Naive thymus-derived CD4-positive, alpha-beta T cell (primary cell): ENCODE measurements at regions of chr9 and their contacts with region 1.

Region 1: GRCh38 chr9:131502781-131503625 is at the start of gene POMT1:
- DNase-seq: peak; percentile 85 to 93 (median 90)
- ATAC-seq: peak; percentile 77
- H3K4me3 ChIP-seq: peak within 1 kb of the TSS; percentile 79
- H3K4me3 Mint-ChIP-seq: peak within 1 kb of the TSS; percentile 89 to 99 (median 94)
- H3K27ac ChIP-seq: peak within 1 kb of the TSS; percentile 88
- H3K27ac Mint-ChIP-seq: peak within 1 kb of the TSS; percentile 88 to 98 (median 93)
- H3K4me1 ChIP-seq: peaks cover 41 to 42% of the 10 kb centered on the region in 2 donors
- H3K4me1 Mint-ChIP-seq: peaks cover 51 to 73% (median 60%) of the 10 kb centered on the region in 7 donors
- H3K27me3 ChIP-seq: no peaks in the 10 kb centered on the region
- H3K27me3 Mint-ChIP-seq: no peaks in the 10 kb centered on the region
- total RNA-seq, gene POMT1: 40.0 to 55.8 (median 47.7) TPM

Region 2: DNA sequence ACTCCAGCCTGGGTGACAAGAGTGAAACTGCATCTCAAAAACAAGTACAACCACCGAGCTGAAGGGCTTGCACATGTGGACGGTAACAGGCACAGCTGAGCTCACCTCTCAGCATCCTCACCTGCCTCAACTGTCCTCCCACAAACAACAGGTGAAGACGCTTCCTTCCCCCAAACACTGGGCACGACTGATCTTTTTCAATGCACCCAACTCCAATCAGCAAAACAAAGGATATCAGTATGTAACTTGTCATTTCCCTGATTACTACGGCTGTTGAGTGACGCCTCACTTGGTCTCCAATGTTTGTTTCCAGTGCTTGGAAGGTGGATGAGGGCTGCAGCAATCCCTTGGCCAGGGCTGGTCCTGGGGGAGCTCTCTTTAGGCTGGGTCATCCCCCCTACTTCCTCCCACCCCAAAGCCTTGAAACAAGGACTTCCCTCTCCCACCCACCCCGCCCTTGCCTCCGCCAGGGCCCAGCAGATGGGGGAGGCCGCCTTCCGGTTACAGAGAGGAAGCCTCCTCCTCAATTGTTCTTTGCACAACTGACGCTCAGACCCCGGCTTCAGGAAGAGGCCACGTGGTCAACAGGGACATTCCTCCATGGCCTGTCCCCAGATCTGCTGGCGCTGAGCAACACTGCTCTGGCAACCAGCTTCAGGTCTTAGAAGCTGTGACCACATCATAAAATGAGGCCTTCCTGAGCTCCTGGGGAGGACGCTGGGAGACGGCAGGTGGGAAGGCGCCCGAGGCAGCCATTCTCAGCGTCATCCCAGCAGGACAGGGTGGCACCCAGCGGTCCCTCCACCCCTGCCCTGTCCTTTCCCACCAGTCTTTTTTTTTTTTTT is 232.6 kb before region 1 on chr9:
- CTCF ChIA-PET with region 1: no interaction called
- POLR2A ChIA-PET with region 1: interaction called, 4 read pairs
- intact Hi-C with region 1: loop called (anchors 5 kb)
- DNase-seq: peak in 8 of 9 donors; percentile 49 to 70 (median 64)
- ATAC-seq: peak; percentile 16
- H3K4me3 ChIP-seq: peak overlapping the region; percentile 74
- H3K4me3 Mint-ChIP-seq: peak overlapping the region; percentile 83 to 100 (median 92)
- H3K27ac ChIP-seq: peak overlapping the region; percentile 96
- H3K27ac Mint-ChIP-seq: peak overlapping the region; percentile 95 to 100 (median 99)
- H3K4me1 ChIP-seq: peaks cover 50 to 63% of the 10 kb centered on the region in 2 donors
- H3K4me1 Mint-ChIP-seq: peaks cover 30 to 61% (median 50%) of the 10 kb centered on the region in 7 donors
- H3K27me3 ChIP-seq: no peaks in the 10 kb centered on the region
- H3K27me3 Mint-ChIP-seq: no peaks in the 10 kb centered on the region

Region 3: GRCh38 chr9:131349881-131350563 is 153.0 kb before region 1 on chr9:
- CTCF ChIA-PET with region 1: interaction called, 12 read pairs
- POLR2A ChIA-PET with region 1: interaction called, 3 read pairs
- intact Hi-C with region 1: loop called in 1 of 2 experiments (anchors 2 kb)
- DNase-seq: peak; percentile 74 to 87 (median 82)
- ATAC-seq: peak; percentile 99
- H3K4me3 ChIP-seq: no peak overlapping the region
- H3K4me3 Mint-ChIP-seq: peak overlapping the region in 8 of 10 donors; percentile 12 to 80 (median 57)
- H3K27ac ChIP-seq: no peak overlapping the region
- H3K27ac Mint-ChIP-seq: peak overlapping the region in 5 of 9 donors; percentile 65 to 78 (median 70)
- H3K4me1 ChIP-seq: peaks cover 4 to 9% of the 10 kb centered on the region in 2 donors
- H3K4me1 Mint-ChIP-seq: peaks cover 0 to 15% (median 8%) of the 10 kb centered on the region in 7 donors
- H3K27me3 ChIP-seq: no peaks in the 10 kb centered on the region
- H3K27me3 Mint-ChIP-seq: peaks cover 0 to 5% (median 0%) of the 10 kb centered on the region in 5 donors

Region 4: GRCh38 chr9:131530920-131531832 is 28.2 kb after region 1 on chr9 and contains the start of gene UCK1:
- CTCF ChIA-PET with region 1: no interaction called
- POLR2A ChIA-PET with region 1: interaction called, 6 read pairs
- intact Hi-C with region 1: loop called (anchors 1 to 2 kb)
- DNase-seq: peak; percentile 58 to 84 (median 71)
- ATAC-seq: peak; percentile 97
- H3K4me3 ChIP-seq: peak within 1 kb of the TSS; percentile 63
- H3K4me3 Mint-ChIP-seq: peak within 1 kb of the TSS; percentile 59 to 84 (median 77)
- H3K27ac ChIP-seq: peak within 1 kb of the TSS; percentile 90
- H3K27ac Mint-ChIP-seq: peak within 1 kb of the TSS in 6 of 9 donors; percentile 46 to 85 (median 68)
- H3K4me1 ChIP-seq: peaks cover 21 to 30% of the 10 kb centered on the region in 2 donors
- H3K4me1 Mint-ChIP-seq: peaks cover 15 to 46% (median 34%) of the 10 kb centered on the region in 7 donors
- H3K27me3 ChIP-seq: no peaks in the 10 kb centered on the region
- H3K27me3 Mint-ChIP-seq: no peaks in the 10 kb centered on the region
- total RNA-seq, gene UCK1: 21.8 to 40.1 (median 29.3) TPM

Region 5: GRCh38 chr9:131733541-131734061 is 230.6 kb after region 1 on chr9:
- CTCF ChIA-PET with region 1: interaction called, 4 read pairs
- POLR2A ChIA-PET with region 1: interaction called, 5 read pairs
- intact Hi-C with region 1: loop called (anchors 2 to 5 kb)
- DNase-seq: peak in 2 of 9 donors; percentile 14 to 57
- ATAC-seq: peak; percentile 5
- H3K4me3 ChIP-seq: peak overlapping the region; percentile 46
- H3K4me3 Mint-ChIP-seq: peak overlapping the region; percentile 76 to 89 (median 82)
- H3K27ac ChIP-seq: peak overlapping the region; percentile 73
- H3K27ac Mint-ChIP-seq: peak overlapping the region; percentile 84 to 99 (median 90)
- H3K4me1 ChIP-seq: peaks cover 84 to 85% of the 10 kb centered on the region in 2 donors
- H3K4me1 Mint-ChIP-seq: peaks cover 70 to 93% (median 89%) of the 10 kb centered on the region in 7 donors
- H3K27me3 ChIP-seq: no peaks in the 10 kb centered on the region
- H3K27me3 Mint-ChIP-seq: no peaks in the 10 kb centered on the region

Region 6: DNA sequence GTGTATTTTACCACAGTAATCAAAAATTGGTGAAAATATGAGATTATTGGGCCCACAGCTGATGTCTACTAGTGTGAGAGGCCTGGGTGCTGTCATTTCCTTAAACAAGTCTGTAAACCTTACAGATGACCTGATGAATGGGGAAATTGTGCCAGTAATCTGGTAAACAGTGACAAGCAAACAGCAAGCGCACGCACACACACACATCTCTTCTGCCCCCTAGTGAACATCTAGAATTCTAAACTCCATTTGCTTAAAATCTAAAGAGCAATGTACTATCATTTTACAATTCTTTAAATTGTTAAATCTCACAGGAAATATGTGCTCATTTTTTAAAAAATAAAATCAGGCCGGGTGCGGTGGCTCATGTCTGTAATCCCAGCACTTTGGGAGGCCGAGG is 244.4 kb after region 1 on chr9:
- CTCF ChIA-PET with region 1: interaction called, 3 read pairs
- POLR2A ChIA-PET with region 1: interaction called, 13 read pairs
- intact Hi-C with region 1: loop called in 1 of 2 experiments (anchors 5 kb)
- DNase-seq: peak in 5 of 9 donors; percentile 33 to 51 (median 44)
- ATAC-seq: peak; percentile 75
- H3K4me3 ChIP-seq: no peak overlapping the region
- H3K4me3 Mint-ChIP-seq: no peak overlapping the region
- H3K27ac ChIP-seq: no peak overlapping the region
- H3K27ac Mint-ChIP-seq: peak overlapping the region in 3 of 9 donors; percentile 19 to 68 (median 56)
- H3K4me1 ChIP-seq: peaks cover 17 to 27% of the 10 kb centered on the region in 2 donors
- H3K4me1 Mint-ChIP-seq: peaks cover 26 to 45% (median 33%) of the 10 kb centered on the region in 7 donors
- H3K27me3 ChIP-seq: no peaks in the 10 kb centered on the region
- H3K27me3 Mint-ChIP-seq: peaks cover 0 to 3% (median 0%) of the 10 kb centered on the region in 5 donors

Region 7: DNA sequence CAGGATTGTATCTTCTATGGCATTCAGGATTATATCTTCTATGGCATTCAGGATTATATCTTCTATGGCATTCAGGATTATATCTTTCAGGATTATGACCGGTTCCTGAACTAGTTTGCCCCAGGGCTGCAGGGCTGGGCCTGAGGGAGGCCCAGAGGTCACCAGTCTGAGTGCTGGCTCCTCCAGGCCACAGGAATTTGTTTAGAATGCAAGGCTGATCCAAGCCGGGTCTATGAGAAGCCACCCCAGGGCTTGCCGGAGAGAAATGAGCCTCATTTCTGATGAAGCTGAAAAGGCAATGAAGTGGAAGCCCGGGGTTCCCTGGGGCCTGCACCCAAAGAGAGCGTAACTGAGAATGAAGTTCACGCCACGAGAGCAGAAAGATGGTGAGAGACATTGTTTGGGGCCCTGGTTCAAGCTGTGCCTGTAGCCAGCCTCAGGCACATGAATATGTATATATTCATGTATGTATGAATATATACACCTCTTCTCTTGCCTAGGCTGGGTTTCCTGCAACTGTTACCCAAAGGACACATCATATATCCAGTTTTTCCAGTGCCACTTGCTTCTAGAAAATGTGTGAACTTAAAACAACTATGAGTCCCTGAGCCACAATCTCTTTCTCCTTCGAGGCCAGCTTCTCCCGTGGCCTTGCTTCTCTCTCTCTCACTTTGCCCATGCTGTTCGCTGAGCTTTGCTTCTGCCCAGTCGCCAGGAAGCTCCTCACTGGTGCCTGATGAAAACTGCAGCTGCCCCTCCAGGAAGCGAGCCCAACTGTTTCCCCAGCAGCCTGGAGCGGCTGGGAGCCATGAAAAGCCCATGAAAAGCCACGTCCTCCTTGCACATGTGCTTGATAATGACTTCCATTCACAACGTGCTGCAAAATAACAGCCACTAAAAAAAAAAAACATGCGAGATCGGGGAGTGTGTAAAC is 1229.6 kb after region 1 on chr9:
- CTCF ChIA-PET with region 1: no interaction called
- POLR2A ChIA-PET with region 1: no interaction called
- intact Hi-C with region 1: no loop called
- DNase-seq: no peak
- ATAC-seq: no peak
- H3K4me3 ChIP-seq: no peak overlapping the region
- H3K4me3 Mint-ChIP-seq: no peak overlapping the region
- H3K27ac ChIP-seq: no peak overlapping the region
- H3K27ac Mint-ChIP-seq: no peak overlapping the region
- H3K4me1 ChIP-seq: no peaks in the 10 kb centered on the region
- H3K4me1 Mint-ChIP-seq: no peaks in the 10 kb centered on the region
- H3K27me3 ChIP-seq: no peaks in the 10 kb centered on the region
- H3K27me3 Mint-ChIP-seq: peaks cover 0 to 27% (median 24%) of the 10 kb centered on the region in 5 donors